ENCODE measurements at regions of chr4 and their contacts with region 1.

Region 1: DNA sequence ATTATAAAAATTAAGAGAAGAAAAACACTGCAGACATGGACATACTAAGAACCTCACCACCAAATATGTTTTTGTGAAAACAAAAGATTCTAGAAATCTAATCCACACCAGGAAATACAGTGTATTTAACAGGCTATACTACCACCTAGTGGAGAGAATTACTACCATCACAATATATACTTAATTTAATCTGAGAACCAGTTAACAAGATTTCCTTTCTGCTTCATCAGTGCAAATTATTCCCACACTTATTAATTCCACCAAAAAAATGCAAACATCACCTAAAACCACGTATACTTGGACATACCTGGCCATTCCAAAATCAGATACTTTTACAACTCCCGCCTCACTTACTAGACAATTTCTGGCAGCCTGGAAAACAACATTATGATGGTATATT is 7.0 kb upstream of the TXK start:
- DNase-seq: no peak
- H3K4me3 Mint-ChIP-seq: no peak overlapping the region
- H3K27ac Mint-ChIP-seq: no peak overlapping the region
- H3K4me1 Mint-ChIP-seq: peaks cover 46% of the 10 kb centered on the region
- H3K27me3 Mint-ChIP-seq: no peaks in the 10 kb centered on the region

Region 2: DNA sequence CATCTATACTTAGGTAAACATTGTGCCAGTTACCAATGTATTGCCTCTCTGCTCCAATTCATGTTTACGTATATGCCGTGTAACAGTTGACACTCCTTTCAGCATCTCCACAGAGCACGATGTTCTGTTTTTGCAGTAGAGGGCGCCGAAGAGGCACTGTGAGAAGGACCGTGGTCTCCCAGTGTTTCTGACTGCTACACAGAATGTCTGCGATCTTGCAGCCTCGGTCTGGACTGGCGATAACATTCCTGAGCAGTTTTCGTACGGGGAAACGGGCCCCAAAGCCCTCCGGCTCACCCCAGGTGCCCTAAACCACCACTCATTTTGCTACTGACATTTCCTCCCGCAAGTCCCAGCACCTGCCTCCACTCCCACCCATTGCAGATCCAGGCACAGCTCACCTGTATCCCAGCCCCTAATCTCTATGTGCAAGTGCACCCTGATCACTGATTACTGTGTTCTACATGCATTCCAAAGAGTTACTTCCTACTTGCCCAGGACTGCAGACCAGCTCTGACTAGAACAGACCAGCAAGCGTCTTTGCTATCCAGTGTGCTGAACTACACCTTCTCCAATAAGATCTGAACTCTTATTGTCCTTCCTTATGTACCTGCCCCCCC is 214.3 kb before region 1 on chr4:
- CTCF ChIA-PET with region 1: interaction called, 5 read pairs
- POLR2A ChIA-PET with region 1: no interaction called
- intact Hi-C with region 1: loop called (anchors 2 kb)
- DNase-seq: peak; percentile 65
- H3K4me3 Mint-ChIP-seq: no peak overlapping the region
- H3K27ac Mint-ChIP-seq: no peak overlapping the region
- H3K4me1 Mint-ChIP-seq: peaks cover 6% of the 10 kb centered on the region
- H3K27me3 Mint-ChIP-seq: peaks cover 13% of the 10 kb centered on the region

Region 3: GRCh38 chr4:48008021-48008596 is 132.9 kb before region 1 on chr4:
- CTCF ChIA-PET with region 1: interaction called, 14 read pairs
- POLR2A ChIA-PET with region 1: no interaction called
- intact Hi-C with region 1: loop called (anchors 1 kb)
- DNase-seq: no peak
- H3K4me3 Mint-ChIP-seq: no peak overlapping the region
- H3K27ac Mint-ChIP-seq: no peak overlapping the region
- H3K4me1 Mint-ChIP-seq: no peaks in the 10 kb centered on the region
- H3K27me3 Mint-ChIP-seq: peaks cover 15% of the 10 kb centered on the region

Region 4: GRCh38 chr4:48109413-48110263 is 31.4 kb before region 1 on chr4:
- CTCF ChIA-PET with region 1: interaction called, 39 read pairs
- POLR2A ChIA-PET with region 1: no interaction called
- intact Hi-C with region 1: loop called (anchors 1 kb)
- DNase-seq: no peak
- H3K4me3 Mint-ChIP-seq: no peak overlapping the region
- H3K27ac Mint-ChIP-seq: no peak overlapping the region
- H3K4me1 Mint-ChIP-seq: peaks cover 47% of the 10 kb centered on the region
- H3K27me3 Mint-ChIP-seq: no peaks in the 10 kb centered on the region